ENCODE measurements at regions of chr14 and their contacts with region 1.

Region 1: GRCh38 chr14:76876076-76876475 is 49.9 kb downstream of the LRRC74A start:
- DNase-seq: peak; percentile 78
- CTCF ChIP-seq: peak; percentile 94

Region 2: DNA sequence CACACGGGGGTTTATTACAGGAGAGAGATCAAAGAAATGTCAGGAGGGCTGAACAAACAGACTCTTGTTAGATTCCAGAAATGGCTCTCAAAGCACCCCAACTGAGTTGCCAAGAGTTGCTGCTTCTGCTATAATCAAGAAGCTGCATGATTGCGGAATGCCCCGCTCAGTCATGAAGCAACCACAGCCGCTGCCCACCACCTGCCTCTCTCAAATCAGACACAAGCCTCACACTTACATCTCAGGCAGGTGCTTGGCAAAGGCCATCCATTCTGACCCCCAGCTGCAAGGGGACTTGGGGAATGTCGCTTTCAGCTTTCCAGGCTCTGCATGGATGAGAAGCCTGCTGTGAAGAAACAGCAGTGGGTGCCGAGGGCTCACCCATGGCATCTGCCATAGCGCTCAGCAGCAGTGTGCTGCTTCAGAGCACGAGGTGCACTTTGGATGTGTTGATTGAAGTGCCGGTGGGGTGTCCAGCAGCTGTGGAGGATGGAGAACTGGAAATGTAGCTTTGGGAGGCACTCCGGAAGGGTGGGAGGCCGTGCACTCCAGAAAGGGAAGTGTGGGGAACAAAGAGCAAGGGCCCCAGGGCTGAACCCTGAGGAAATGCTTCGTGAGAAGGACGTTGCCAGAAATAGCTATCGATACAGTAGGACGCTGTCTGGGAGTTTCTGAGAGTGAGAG is 12.2 kb before region 1 on chr14:
- CTCF ChIA-PET with region 1: interaction called, 17 read pairs
- POLR2A ChIA-PET with region 1: no interaction called
- DNase-seq: peak; percentile 38
- CTCF ChIP-seq: no peak

Region 3: GRCh38 chr14:76911473-76911872 is 35.4 kb after region 1 on chr14:
- CTCF ChIA-PET with region 1: interaction called, 61 read pairs
- POLR2A ChIA-PET with region 1: no interaction called
- DNase-seq: no peak
- CTCF ChIP-seq: no peak

Region 4: GRCh38 chr14:76977793-76978720 is 102.0 kb after region 1 on chr14:
- CTCF ChIA-PET with region 1: no interaction called
- POLR2A ChIA-PET with region 1: no interaction called
- DNase-seq: peak; percentile 91
- CTCF ChIP-seq: no peak

Region 5: GRCh38 chr14:77053046-77053841 is 177.2 kb after region 1 on chr14:
- CTCF ChIA-PET with region 1: interaction called, 67 read pairs
- POLR2A ChIA-PET with region 1: no interaction called
- DNase-seq: peak; percentile 83
- CTCF ChIP-seq: peak; percentile 84

Region 6: DNA sequence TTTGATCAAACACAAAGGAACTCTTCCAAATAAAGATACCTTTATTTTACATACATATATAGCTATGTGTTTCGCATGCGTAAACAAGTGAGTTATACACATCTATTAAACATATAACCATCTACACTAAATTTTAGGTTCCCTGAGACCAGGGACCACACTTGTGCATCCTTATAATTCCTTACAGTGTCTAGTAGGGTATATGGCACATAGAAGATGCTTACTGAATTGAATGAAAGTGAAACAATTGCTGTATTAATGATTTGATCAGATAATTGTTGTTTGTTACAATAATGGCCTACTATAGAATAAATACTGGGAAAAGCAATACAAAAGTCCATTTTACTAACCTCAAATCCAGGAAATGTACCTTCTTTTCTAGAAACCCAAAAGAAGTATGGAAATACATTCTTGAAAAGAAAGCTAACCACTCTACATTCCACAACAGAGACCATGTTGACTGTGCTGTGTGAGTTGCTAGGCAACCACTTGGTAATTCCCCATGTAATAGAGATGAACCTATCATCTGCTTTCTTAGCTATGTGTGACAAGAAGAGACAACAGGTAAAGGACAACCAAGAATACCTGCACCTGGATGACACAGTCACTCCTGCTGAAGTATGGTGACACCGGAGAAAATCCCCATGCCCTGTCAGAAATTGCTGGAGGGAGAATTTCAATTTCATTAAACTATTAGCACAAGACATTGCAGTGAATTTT is 210.1 kb after region 1 on chr14:
- CTCF ChIA-PET with region 1: interaction called, 586 read pairs
- POLR2A ChIA-PET with region 1: no interaction called
- DNase-seq: peak; percentile 46
- CTCF ChIP-seq: no peak

Region 7: GRCh38 chr14:77212943-77213678 is 337.0 kb after region 1 on chr14:
- CTCF ChIA-PET with region 1: interaction called, 23 read pairs
- POLR2A ChIA-PET with region 1: no interaction called
- DNase-seq: peak; percentile 75
- CTCF ChIP-seq: peak; percentile 87

Measured in GM10248 (cell line).